ENCODE measurements at regions of chr3 and their contacts with region 1.

Region 1: GRCh38 chr3:50550079-50550741 is 17.3 kb downstream of the C3orf18 start:
- DNase-seq: peak in 1 of 2 experiments; percentile 94
- H3K4me3 ChIP-seq: no peak overlapping the region
- H3K27ac ChIP-seq: no peak overlapping the region
- H3K4me1 ChIP-seq: peaks cover 0 to 6% (median 2%) of the 10 kb centered on the region in 4 experiments; a peak in 3 of 7 replicates
- H3K27me3 ChIP-seq: peaks cover 0 to 3% (median 0%) of the 10 kb centered on the region in 4 experiments; a peak in 3 of 7 replicates
- CTCF ChIP-seq: peak in 2 of 3 experiments; percentile 81 to 88; a peak in 3 of 4 replicates
- EP300 ChIP-seq: no peak
- POLR2A ChIP-seq: no peak
- RAD21 ChIP-seq: peak; percentile 91

Region 2: GRCh38 chr3:50388016-50388719 is 162.0 kb before region 1 on chr3:
- CTCF ChIA-PET with region 1: interaction called, 21 read pairs
- POLR2A ChIA-PET with region 1: interaction called, 3 read pairs
- DNase-seq: peak in 1 of 2 experiments; percentile 67
- H3K4me3 ChIP-seq: no peak overlapping the region
- H3K27ac ChIP-seq: no peak overlapping the region
- H3K4me1 ChIP-seq: peaks cover 0 to 2% (median under 1%) of the 10 kb centered on the region in 4 experiments; a peak in 3 of 7 replicates
- H3K27me3 ChIP-seq: peaks cover 0 to 3% (median 0%) of the 10 kb centered on the region in 4 experiments; a peak in 1 of 7 replicates
- CTCF ChIP-seq: peak in 2 of 3 experiments; percentile 72 to 77; a peak in 3 of 4 replicates
- EP300 ChIP-seq: no peak
- POLR2A ChIP-seq: no peak
- RAD21 ChIP-seq: peak; percentile 65 to 70

Region 3: DNA sequence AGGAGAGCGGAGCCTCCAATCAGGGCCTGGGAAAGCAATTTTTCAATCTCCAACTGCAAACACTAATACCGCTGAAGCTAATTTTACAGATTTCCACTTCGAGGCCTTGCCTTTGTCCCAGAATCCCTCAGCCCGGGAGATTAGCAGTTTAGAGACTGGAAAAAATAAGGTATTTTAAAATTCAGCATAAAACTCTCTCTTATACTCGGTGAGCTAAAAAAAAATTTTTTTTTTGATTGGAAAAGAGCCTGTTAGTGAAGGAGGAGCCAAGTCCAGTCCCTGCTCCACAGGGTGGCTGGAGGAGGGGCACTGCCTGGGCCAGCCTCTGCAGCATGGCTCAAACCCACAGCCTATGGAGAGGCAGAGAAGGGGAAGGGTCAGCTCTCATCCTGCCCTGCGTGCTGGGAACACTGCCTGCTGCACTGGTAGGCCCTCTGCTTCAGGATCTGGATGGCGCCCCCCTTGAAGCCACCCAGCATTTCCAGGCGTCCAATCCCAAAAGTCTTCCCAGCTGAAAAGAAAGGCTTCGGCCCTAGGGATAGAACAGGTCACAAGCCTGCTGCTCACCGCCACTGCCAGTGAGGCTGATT is 95.6 kb before region 1 on chr3:
- CTCF ChIA-PET with region 1: interaction called, 18 read pairs
- POLR2A ChIA-PET with region 1: interaction called, 3 read pairs
- DNase-seq: peak in 1 of 2 experiments; percentile 67
- H3K4me3 ChIP-seq: no peak overlapping the region
- H3K27ac ChIP-seq: no peak overlapping the region
- H3K4me1 ChIP-seq: peaks cover 0 to 31% (median 18%) of the 10 kb centered on the region in 4 experiments; a peak in 6 of 7 replicates
- H3K27me3 ChIP-seq: no peaks in the 10 kb centered on the region
- CTCF ChIP-seq: no peak
- EP300 ChIP-seq: no peak
- POLR2A ChIP-seq: no peak
- RAD21 ChIP-seq: no peak

Region 4: DNA sequence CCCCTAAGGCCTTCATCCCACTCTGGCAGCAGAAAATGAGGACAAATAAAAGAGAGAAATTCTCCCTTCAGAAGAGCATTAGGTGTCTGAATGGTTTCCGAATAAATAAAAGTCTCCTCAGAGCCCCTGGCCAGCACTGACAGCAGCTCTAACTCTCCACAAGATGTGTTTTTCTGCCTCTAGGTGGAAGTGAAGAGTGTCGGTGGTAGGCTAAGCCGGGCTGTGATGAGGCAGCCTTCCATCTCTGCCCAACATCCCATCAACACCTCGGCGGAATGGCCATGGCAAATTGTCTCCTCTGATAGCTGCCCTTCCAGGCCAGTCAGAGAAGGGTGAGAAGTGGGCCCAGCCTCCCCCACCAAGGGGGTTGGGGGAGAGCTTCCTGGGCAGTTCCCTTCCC is 40.5 kb before region 1 on chr3:
- CTCF ChIA-PET with region 1: interaction called, 114 read pairs
- POLR2A ChIA-PET with region 1: no interaction called
- DNase-seq: no peak
- H3K4me3 ChIP-seq: no peak overlapping the region
- H3K27ac ChIP-seq: no peak overlapping the region
- H3K4me1 ChIP-seq: peaks cover 0 to 6% (median 0%) of the 10 kb centered on the region in 4 experiments; a peak in 3 of 7 replicates
- H3K27me3 ChIP-seq: peaks cover 0 to 11% (median 4%) of the 10 kb centered on the region in 4 experiments; a peak in 6 of 7 replicates
- CTCF ChIP-seq: peak in 2 of 3 experiments; percentile 23 to 27; a peak in 3 of 4 replicates
- EP300 ChIP-seq: no peak
- POLR2A ChIP-seq: no peak
- RAD21 ChIP-seq: peak in 1 of 2 experiments; percentile 35; a peak in 2 of 4 replicates

Region 5: DNA sequence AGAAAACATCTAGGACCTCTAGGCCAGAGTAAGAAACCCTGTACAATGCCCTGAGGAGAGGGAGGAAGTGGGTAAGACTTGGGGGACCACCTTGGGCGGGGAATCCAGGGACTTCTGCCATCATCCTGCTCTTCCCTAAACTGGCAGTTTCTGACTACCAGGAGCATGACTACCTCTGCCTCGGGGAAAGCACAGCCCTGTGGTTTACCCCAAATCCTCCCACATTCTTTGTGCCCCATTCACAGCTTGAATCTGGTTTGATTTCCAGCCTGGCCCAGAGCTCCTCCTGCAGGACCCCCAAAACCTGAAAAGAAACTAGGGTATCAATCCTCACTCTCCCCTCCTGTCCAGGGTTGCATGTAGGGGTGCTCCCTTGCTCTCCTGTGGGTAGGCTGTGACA is 12.7 kb after region 1 on chr3:
- CTCF ChIA-PET with region 1: interaction called, 43 read pairs
- POLR2A ChIA-PET with region 1: interaction called, 9 read pairs
- DNase-seq: no peak
- H3K4me3 ChIP-seq: no peak overlapping the region
- H3K27ac ChIP-seq: no peak overlapping the region
- H3K4me1 ChIP-seq: peaks cover 0 to 6% (median 3%) of the 10 kb centered on the region in 4 experiments; a peak in 5 of 7 replicates
- H3K27me3 ChIP-seq: peaks cover 0 to 13% (median 5%) of the 10 kb centered on the region in 4 experiments; a peak in 4 of 7 replicates
- CTCF ChIP-seq: no peak
- EP300 ChIP-seq: no peak
- POLR2A ChIP-seq: no peak
- RAD21 ChIP-seq: no peak

Region 6: DNA sequence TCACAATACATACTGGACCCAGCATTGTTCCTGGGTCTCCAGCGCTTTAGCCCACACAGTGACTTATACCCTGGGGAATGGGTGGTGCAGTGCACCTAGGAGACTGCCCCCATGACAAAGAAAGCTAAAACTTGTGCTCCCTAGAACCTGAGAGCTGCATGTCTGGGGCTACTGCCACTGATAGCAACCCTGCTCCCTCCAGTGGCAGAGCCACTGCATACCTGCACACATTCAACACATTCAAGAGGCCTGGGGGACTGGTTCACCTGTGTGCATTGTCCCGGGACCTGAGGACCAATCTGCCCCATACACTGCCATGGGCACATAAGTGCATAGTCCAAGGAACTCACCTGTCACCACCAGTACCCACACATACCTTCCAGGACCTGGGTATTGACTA is 532.2 kb after region 1 on chr3:
- CTCF ChIA-PET with region 1: no interaction called
- POLR2A ChIA-PET with region 1: no interaction called
- DNase-seq: no peak
- H3K4me3 ChIP-seq: no peak overlapping the region
- H3K27ac ChIP-seq: no peak overlapping the region
- H3K4me1 ChIP-seq: no peaks in the 10 kb centered on the region
- H3K27me3 ChIP-seq: no peaks in the 10 kb centered on the region
- CTCF ChIP-seq: peak; percentile 4 to 13 (median 8); a peak in 3 of 4 replicates
- EP300 ChIP-seq: no peak
- POLR2A ChIP-seq: no peak
- RAD21 ChIP-seq: peak in 1 of 2 experiments; percentile 37; a peak in 3 of 4 replicates

Measured in H1 (cell line).